HCT116 (cell line): ENCODE measurements at regions of chr17 and their contacts with region 1.

Region 1: DNA sequence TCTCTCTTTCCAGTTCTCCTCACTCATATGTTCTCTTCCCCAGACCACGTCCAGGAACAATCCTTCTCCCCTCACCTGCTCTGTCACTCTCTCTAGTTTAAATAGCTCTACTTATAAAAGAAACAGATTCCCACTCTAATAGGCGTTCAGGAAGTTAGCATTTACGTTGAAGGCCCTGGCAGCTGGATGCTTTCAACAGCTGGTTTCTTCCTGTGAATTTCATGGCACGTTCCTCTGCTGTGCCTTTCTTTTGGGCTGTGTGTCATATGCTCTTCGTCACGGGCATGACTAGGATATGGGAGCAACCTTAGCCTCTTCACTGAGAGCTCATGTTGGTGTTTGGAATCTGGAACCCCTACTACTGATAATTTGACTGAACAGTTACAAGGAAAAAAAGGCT is 73.2 kb downstream of the ZNF18 start:
- DNase-seq: no peak
- ATAC-seq: no peak
- H3K4me3 ChIP-seq: no peak overlapping the region
- H3K27ac ChIP-seq: no peak overlapping the region
- H3K4me1 ChIP-seq: peaks cover 5 to 11% of the 10 kb centered on the region in 2 experiments; a peak in 3 of 4 replicates
- H3K27me3 ChIP-seq: no peaks in the 10 kb centered on the region
- CTCF ChIP-seq: no peak
- POLR2A ChIP-seq: no peak
- RAD21 ChIP-seq: no peak

Region 2: GRCh38 chr17:11899537-11899942 is 24.5 kb before region 1 on chr17:
- CTCF ChIA-PET with region 1: no interaction called
- POLR2A ChIA-PET with region 1: no interaction called
- RAD21 ChIA-PET with region 1: no interaction called
- intact Hi-C with region 1: loop called (anchors 1 kb)
- DNase-seq: no peak
- ATAC-seq: no peak
- H3K4me3 ChIP-seq: no peak overlapping the region
- H3K27ac ChIP-seq: no peak overlapping the region
- H3K4me1 ChIP-seq: no peaks in the 10 kb centered on the region
- H3K27me3 ChIP-seq: no peaks in the 10 kb centered on the region
- CTCF ChIP-seq: no peak
- POLR2A ChIP-seq: no peak
- RAD21 ChIP-seq: peak; percentile 31